ENCODE measurements at regions of chr11 and their contacts with region 1.

Region 1: GRCh38 chr11:76207642-76208401 is 1.5 kb upstream of the WNT11 start:
- DNase-seq: peak; percentile 80
- H3K4me3 Mint-ChIP-seq: peak overlapping the region; percentile 66
- H3K27ac Mint-ChIP-seq: no peak overlapping the region
- H3K4me1 Mint-ChIP-seq: peaks cover 22% of the 10 kb centered on the region
- H3K27me3 Mint-ChIP-seq: peaks cover 100% of the 10 kb centered on the region

Region 2: DNA sequence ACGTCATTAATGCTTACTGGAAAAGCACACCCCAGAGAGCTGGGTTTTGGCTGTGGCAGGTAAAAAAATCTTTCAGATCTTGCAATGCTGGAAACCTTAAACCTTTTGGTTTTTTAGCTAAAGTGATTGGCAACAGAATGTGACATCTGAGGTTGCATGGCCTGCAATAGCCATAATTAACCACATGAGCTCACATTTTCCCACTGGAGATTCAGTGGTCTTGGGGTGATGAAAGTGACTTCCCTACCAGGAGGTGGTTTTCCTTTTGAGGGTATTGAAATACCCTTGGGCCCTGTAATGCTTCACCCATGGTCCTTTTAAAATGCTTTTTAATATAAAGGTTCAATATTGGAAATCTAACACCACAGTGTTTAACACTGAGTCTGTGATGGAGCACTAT is 194.3 kb before region 1 on chr11:
- CTCF ChIA-PET with region 1: no interaction called
- DNase-seq: no peak
- H3K4me3 Mint-ChIP-seq: no peak overlapping the region
- H3K27ac Mint-ChIP-seq: no peak overlapping the region
- H3K4me1 Mint-ChIP-seq: no peaks in the 10 kb centered on the region
- H3K27me3 Mint-ChIP-seq: no peaks in the 10 kb centered on the region

Region 3: GRCh38 chr11:76225122-76225611 is 17.3 kb after region 1 on chr11:
- CTCF ChIA-PET with region 1: interaction called, 106 read pairs
- DNase-seq: no peak
- H3K4me3 Mint-ChIP-seq: no peak overlapping the region
- H3K27ac Mint-ChIP-seq: no peak overlapping the region
- H3K4me1 Mint-ChIP-seq: peaks cover 6% of the 10 kb centered on the region
- H3K27me3 Mint-ChIP-seq: peaks cover 47% of the 10 kb centered on the region

Region 4: DNA sequence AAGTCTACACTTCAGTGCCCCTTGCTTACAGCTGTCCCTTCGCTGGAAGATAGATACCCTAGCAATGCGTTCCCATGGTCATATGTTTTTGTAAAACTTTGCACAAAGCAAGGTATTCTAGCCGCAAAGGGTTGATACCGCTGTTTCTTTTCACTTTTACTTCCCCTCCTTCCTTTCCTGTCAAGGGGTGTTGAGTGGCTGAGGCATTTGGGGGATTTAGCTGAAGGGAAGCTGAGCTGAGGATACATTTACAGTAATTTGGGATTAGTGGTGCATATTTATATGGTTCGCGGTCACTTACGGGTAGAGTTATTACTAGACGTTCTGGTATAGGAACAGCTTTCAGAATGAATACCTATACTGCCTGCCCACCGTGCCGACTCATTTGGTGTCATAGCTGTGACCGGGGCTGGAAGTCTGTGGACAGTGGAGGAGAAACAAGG is 85.4 kb after region 1 on chr11:
- CTCF ChIA-PET with region 1: interaction called, 16 read pairs
- DNase-seq: no peak
- H3K4me3 Mint-ChIP-seq: no peak overlapping the region
- H3K27ac Mint-ChIP-seq: no peak overlapping the region
- H3K4me1 Mint-ChIP-seq: peaks cover 18% of the 10 kb centered on the region
- H3K27me3 Mint-ChIP-seq: no peaks in the 10 kb centered on the region

Region 5: GRCh38 chr11:76318744-76319384 is 111.0 kb after region 1 on chr11:
- CTCF ChIA-PET with region 1: interaction called, 218 read pairs
- DNase-seq: peak; percentile 89
- H3K4me3 Mint-ChIP-seq: no peak overlapping the region
- H3K27ac Mint-ChIP-seq: no peak overlapping the region
- H3K4me1 Mint-ChIP-seq: peaks cover 18% of the 10 kb centered on the region
- H3K27me3 Mint-ChIP-seq: peaks cover 76% of the 10 kb centered on the region

Region 6: DNA sequence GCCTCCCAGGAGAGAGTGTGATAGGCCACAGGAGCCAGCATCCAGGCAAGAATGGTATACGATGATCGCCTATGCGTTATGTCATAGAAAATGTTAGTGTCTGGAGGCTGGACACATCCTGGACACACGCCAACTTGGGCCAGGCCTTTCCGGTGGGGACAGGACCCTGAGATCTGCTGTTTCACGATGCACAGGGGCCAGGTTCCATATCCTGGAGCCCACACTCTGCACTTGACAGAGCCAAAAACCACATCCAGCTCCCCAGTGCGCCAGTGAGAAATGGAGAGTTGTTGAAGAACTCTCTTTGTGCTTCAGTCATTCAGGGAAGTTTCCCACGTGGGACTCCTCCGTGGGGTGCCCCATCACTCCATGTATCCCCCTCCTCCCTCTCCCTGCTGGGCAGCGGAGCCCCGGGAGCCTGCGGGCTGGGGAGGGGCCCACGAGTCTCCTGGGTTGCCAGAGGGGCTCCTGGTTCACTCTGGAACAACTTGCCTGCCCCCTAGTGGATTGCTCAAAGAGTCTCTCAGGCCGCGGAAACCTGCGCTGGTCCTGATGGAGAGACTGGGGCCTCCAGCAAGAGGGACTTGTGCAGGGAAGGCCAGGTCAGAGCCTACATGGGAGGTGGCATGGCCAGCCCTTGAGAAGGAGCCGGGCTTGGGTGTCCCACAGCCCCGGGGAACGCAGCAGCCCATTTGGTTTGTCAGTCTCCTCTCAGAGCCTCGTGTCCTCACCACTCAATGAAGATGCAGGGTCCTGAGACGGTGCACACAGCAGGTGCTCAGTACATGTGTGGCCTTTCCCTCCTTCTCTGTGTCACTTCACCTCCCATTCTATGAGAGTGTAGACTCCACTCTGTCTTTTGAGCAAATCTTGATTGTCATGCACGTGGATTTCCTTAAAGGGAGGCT is 472.9 kb after region 1 on chr11:
- CTCF ChIA-PET with region 1: interaction called, 19 read pairs
- DNase-seq: peak; percentile 79
- H3K4me3 Mint-ChIP-seq: no peak overlapping the region
- H3K27ac Mint-ChIP-seq: no peak overlapping the region
- H3K4me1 Mint-ChIP-seq: peaks cover 34% of the 10 kb centered on the region
- H3K27me3 Mint-ChIP-seq: peaks cover 53% of the 10 kb centered on the region